ENCODE measurements at regions of chr1 and their contacts with region 1.

Region 1: GRCh38 chr1:192808518-192809306 is at the start of gene RGS2:
- DNase-seq: peak; percentile 94
- H3K4me3 Mint-ChIP-seq: peak within 1 kb of the TSS; percentile 99
- H3K27ac Mint-ChIP-seq: peak within 1 kb of the TSS; percentile 99
- H3K4me1 Mint-ChIP-seq: peaks cover 37% of the 10 kb centered on the region
- H3K27me3 Mint-ChIP-seq: no peaks in the 10 kb centered on the region
- CTCF ChIP-seq: no peak
- total RNA-seq, gene RGS2: 46.9 and 93.2 TPM in 2 replicates

Region 2: GRCh38 chr1:192477630-192478029 is 331.1 kb before region 1 on chr1:
- CTCF ChIA-PET with region 1: interaction called, 14 read pairs
- intact Hi-C with region 1: loop called (anchors 2 kb)
- DNase-seq: no peak
- H3K4me3 Mint-ChIP-seq: no peak overlapping the region
- H3K27ac Mint-ChIP-seq: no peak overlapping the region
- H3K4me1 Mint-ChIP-seq: peaks cover 8% of the 10 kb centered on the region
- H3K27me3 Mint-ChIP-seq: no peaks in the 10 kb centered on the region
- CTCF ChIP-seq: peak; percentile 20

Region 3: GRCh38 chr1:192633533-192634253 is 175.0 kb before region 1 on chr1:
- CTCF ChIA-PET with region 1: interaction called, 5 read pairs
- intact Hi-C with region 1: loop called (anchors 5 kb)
- DNase-seq: no peak
- H3K4me3 Mint-ChIP-seq: no peak overlapping the region
- H3K27ac Mint-ChIP-seq: no peak overlapping the region
- H3K4me1 Mint-ChIP-seq: peaks cover 35% of the 10 kb centered on the region
- H3K27me3 Mint-ChIP-seq: no peaks in the 10 kb centered on the region
- CTCF ChIP-seq: no peak

Region 4: DNA sequence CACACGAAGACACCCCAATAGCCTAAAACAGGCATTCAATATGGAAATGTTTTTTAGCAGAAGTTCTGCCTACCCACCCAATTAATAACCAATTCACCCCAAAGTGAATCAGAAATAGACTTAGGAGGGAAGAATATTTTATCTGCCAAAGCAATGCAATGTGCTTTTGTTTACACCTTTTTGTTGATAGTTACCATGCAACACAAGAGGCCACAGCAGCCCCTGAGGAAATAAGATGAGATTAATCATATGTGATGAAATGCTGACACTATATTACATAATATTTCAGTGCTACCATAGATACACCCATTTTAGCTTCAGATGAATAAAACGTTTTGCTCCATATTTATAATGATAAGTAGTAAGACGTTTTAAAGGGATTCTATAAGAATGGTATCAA is 60.8 kb before region 1 on chr1:
- CTCF ChIA-PET with region 1: interaction called, 4 read pairs
- intact Hi-C with region 1: loop called (anchors 1 kb)
- DNase-seq: peak; percentile 30
- H3K4me3 Mint-ChIP-seq: no peak overlapping the region
- H3K27ac Mint-ChIP-seq: peak overlapping the region; percentile 85
- H3K4me1 Mint-ChIP-seq: peaks cover 24% of the 10 kb centered on the region
- H3K27me3 Mint-ChIP-seq: no peaks in the 10 kb centered on the region
- CTCF ChIP-seq: no peak

Region 5: DNA sequence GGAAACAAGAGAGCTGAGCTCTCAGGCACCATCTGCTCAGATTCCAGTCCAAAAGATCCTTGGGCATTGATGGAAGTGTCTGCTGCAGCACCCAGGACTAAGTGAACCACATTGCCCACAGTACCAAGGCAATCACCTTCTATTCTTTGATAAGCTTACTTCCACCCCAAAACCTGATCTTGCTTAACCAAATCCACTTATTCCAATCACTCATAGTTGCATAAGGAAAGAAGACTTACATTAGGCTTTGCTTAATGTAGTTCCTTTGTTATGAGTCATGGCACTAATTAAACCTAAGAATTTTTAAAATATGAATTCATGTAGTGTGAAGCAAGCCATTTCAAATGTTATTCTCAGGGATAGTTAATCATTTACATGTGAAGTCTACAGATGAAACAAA is 166.0 kb after region 1 on chr1:
- CTCF ChIA-PET with region 1: interaction called, 9 read pairs
- intact Hi-C with region 1: loop called (anchors 2 kb)
- DNase-seq: peak; percentile 7
- H3K4me3 Mint-ChIP-seq: peak overlapping the region; percentile 20
- H3K27ac Mint-ChIP-seq: peak overlapping the region; percentile 73
- H3K4me1 Mint-ChIP-seq: peaks cover 68% of the 10 kb centered on the region
- H3K27me3 Mint-ChIP-seq: no peaks in the 10 kb centered on the region
- CTCF ChIP-seq: no peak

Region 6: DNA sequence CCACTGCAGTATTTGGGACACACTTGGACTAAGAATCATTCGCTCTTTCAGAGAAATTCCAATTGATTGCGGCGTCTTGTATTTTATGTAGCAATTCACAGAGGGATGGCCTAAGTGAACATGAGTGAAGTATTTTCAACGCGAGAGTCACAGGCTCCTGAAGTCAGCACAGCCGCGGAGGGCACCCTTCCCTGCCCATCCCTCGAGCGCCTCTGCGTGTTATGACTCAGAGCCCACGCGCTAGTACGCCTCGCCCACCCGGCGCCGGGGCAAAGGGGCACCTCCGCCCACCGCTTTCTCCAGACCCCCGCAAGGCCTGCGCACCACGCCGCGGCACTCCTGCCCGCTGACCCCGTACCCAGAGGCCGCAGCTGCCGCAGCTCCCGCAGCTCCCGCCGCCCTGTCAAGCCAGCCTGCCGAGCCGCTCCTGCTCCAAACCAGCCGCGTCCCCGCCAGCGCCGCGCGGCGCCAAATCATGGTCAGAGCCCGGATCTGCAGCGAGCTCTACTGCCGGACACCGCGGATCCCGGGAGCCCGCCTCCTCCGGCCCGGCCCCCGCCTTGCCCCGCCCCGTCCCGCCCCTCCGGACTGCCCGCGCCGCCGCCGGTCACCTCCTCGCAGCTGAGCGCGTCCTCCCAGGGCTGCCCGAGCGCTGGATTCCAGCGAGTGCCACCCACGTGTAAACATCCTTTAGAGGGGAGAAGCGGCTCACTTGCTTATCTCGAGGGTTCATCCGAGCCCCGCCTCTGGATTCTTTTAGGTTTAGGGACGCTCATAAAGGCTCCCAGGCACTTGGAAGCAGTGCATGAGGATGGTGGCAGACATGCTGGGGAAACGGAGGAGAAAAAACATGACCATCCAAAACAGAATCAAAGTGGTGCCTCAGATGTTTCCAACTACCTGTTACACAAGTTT is 296.5 kb after region 1 on chr1 and contains the start of gene GLRX2:
- CTCF ChIA-PET with region 1: no interaction called
- intact Hi-C with region 1: loop called (anchors 5 kb)
- DNase-seq: peak; percentile 90
- H3K4me3 Mint-ChIP-seq: peak within 1 kb of the TSS; percentile 83
- H3K27ac Mint-ChIP-seq: peak within 1 kb of the TSS; percentile 76
- H3K4me1 Mint-ChIP-seq: peaks cover 17% of the 10 kb centered on the region
- H3K27me3 Mint-ChIP-seq: no peaks in the 10 kb centered on the region
- CTCF ChIP-seq: no peak
- total RNA-seq, gene GLRX2: 25.7 and 27.4 TPM in 2 replicates